Mammary epithelial cell (primary cell): ENCODE measurements at regions of chr9 and their contacts with region 1.

Region 1: DNA sequence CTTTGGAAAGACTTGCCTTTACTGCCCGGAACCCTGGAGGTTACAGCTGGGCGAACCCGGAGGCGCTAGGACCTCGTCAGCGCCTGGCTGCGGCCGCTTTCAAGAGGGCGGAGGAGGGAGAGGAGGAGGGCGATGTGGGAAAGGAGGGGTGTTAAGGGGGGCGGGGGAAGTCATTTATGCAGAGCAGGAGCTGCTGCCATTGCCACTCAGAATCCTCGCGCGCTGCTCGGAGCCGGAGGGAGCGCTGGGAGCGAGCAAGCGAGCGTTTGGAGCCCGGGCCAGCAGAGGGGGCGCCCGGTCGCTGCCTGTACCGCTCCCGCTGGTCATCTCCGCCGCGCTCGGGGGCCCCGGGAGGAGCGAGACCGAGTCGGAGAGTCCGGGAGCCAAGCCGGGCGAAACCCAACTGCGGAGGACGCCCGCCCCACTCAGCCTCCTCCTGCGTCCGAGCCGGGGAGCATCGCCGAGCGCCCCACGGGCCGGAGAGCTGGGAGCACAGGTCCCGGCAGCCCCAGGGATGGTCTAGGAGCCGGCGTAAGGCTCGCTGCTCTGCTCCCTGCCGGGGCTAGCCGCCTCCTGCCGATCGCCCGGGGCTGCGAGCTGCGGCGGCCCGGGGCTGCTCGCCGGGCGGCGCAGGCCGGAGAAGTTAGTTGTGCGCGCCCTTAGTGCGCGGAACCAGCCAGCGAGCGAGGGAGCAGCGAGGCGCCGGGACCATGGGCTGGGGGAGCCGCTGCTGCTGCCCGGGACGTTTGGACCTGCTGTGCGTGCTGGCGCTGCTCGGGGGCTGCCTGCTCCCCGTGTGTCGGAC is at the start of gene PCSK5:
- DNase-seq: peak; percentile 92
- H3K4me3 ChIP-seq: peak within 1 kb of the TSS; percentile 44 to 60 (median 60)
- H3K27ac ChIP-seq: peak within 1 kb of the TSS; percentile 71
- H3K4me1 ChIP-seq: peaks cover 16% of the 10 kb centered on the region
- H3K27me3 ChIP-seq: no peaks in the 10 kb centered on the region
- CTCF ChIP-seq: no peak
- total RNA-seq, gene PCSK5: 2.7 to 15.2 TPM

Region 2: DNA sequence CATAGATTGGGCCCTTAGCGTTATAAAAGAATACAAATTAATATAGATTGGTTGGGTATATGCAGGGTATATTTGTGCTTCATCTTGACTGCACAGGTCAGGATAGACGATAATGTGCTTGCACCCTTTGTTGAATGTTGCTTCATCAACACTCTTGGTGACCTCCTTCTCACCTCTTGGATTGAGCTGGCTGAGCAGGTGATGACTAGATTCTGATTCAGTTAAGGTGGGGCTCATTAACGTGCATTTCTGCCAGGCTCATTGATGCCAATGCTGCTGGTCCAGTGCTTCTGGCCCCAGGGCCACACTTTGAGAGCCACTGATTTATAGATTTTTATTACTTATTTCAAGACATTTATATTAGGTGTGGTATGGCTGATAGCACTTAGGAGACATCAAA is 27.5 kb after region 1 on chr9:
- CTCF ChIA-PET with region 1: no interaction called
- dilution Hi-C with region 1: no loop called
- in situ Hi-C with region 1: no loop called
- intact Hi-C with region 1: loop called (anchors 2 kb)
- DNase-seq: peak; percentile 86
- H3K4me3 ChIP-seq: no peak overlapping the region
- H3K27ac ChIP-seq: peak overlapping the region; percentile 55
- H3K4me1 ChIP-seq: peaks cover 8% of the 10 kb centered on the region
- H3K27me3 ChIP-seq: no peaks in the 10 kb centered on the region
- CTCF ChIP-seq: no peak

Region 3: GRCh38 chr9:75964427-75964826 is 73.8 kb after region 1 on chr9:
- CTCF ChIA-PET with region 1: no interaction called
- dilution Hi-C with region 1: no loop called
- in situ Hi-C with region 1: no loop called
- intact Hi-C with region 1: loop called (anchors 1 kb)
- DNase-seq: peak; percentile 89
- H3K4me3 ChIP-seq: no peak overlapping the region
- H3K27ac ChIP-seq: peak overlapping the region; percentile 79
- H3K4me1 ChIP-seq: peaks cover 8% of the 10 kb centered on the region
- H3K27me3 ChIP-seq: no peaks in the 10 kb centered on the region
- CTCF ChIP-seq: no peak

Region 4: GRCh38 chr9:76181020-76181641 is 290.5 kb after region 1 on chr9:
- CTCF ChIA-PET with region 1: no interaction called
- dilution Hi-C with region 1: no loop called
- in situ Hi-C with region 1: no loop called
- intact Hi-C with region 1: loop called (anchors 10 kb)
- DNase-seq: peak; percentile 79
- H3K4me3 ChIP-seq: no peak overlapping the region
- H3K27ac ChIP-seq: peak overlapping the region; percentile 19
- H3K4me1 ChIP-seq: peaks cover 17% of the 10 kb centered on the region
- H3K27me3 ChIP-seq: no peaks in the 10 kb centered on the region
- CTCF ChIP-seq: no peak